ENCODE measurements at regions of chr6 and their contacts with region 1.

Region 1: DNA sequence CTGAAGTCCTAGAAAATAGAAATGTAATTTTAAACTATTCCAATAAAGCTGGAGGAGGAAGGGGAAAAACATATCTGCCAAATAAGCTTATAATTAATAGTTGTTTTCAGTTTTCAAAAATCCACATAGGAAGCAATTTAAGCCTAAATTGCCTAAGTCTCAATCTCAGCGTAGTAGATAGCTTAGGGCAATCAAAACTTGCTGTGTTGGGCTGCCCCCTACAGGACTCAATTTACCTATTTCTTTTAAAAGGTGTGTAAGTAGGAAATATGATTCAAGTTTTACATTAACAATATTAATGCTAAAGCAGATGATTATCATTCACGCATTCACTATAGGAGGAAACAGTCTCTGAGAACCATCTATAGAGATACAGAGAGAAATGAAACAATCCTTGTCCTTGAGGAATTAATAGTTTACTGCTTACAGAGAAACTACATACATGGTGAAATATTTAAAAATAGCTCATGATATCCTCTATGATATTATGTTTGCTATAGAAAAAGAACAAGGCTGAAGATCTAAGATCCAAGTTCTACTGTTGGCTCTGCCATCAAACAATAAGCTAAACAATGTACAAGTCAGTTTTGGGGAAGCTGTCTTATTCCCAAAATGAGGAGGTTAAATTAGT is 102.1 kb downstream of the ATG5 start:
- DNase-seq: peak; percentile 55 to 79 (median 58)
- H3K4me3 ChIP-seq: no peak overlapping the region
- H3K4me3 Mint-ChIP-seq: no peak overlapping the region
- H3K27ac ChIP-seq: no peak overlapping the region
- H3K27ac Mint-ChIP-seq: peak overlapping the region in 3 of 8 donors; percentile 25 to 63 (median 25)
- H3K4me1 ChIP-seq: no peaks in the 10 kb centered on the region
- H3K4me1 Mint-ChIP-seq: peaks cover 18 to 52% (median 26%) of the 10 kb centered on the region in 3 donors
- H3K27me3 ChIP-seq: no peaks in the 10 kb centered on the region
- H3K27me3 Mint-ChIP-seq: no peaks in the 10 kb centered on the region

Region 2: GRCh38 chr6:105484238-105485161 is 738.9 kb before region 1 on chr6:
- CTCF ChIA-PET with region 1: interaction called, 23 read pairs
- POLR2A ChIA-PET with region 1: no interaction called
- DNase-seq: peak in 2 of 5 donors; percentile 18 to 37
- H3K4me3 ChIP-seq: no peak overlapping the region
- H3K4me3 Mint-ChIP-seq: peak overlapping the region; percentile 62 to 87 (median 78)
- H3K27ac ChIP-seq: no peak overlapping the region
- H3K27ac Mint-ChIP-seq: peak overlapping the region; percentile 69 to 99 (median 89)
- H3K4me1 ChIP-seq: no peaks in the 10 kb centered on the region
- H3K4me1 Mint-ChIP-seq: peaks cover 34 to 60% (median 50%) of the 10 kb centered on the region in 3 donors
- H3K27me3 ChIP-seq: no peaks in the 10 kb centered on the region
- H3K27me3 Mint-ChIP-seq: no peaks in the 10 kb centered on the region

Region 3: GRCh38 chr6:105992315-105992961 is 231.0 kb before region 1 on chr6:
- CTCF ChIA-PET with region 1: interaction called, 39 read pairs
- POLR2A ChIA-PET with region 1: interaction called, 5 read pairs
- DNase-seq: peak; percentile 84 to 91 (median 87)
- H3K4me3 ChIP-seq: peak overlapping the region; percentile 93
- H3K4me3 Mint-ChIP-seq: peak overlapping the region; percentile 88 to 99 (median 92)
- H3K27ac ChIP-seq: peak overlapping the region; percentile 79
- H3K27ac Mint-ChIP-seq: peak overlapping the region; percentile 91 to 99 (median 96)
- H3K4me1 ChIP-seq: peaks cover 22% of the 10 kb centered on the region
- H3K4me1 Mint-ChIP-seq: peaks cover 21 to 42% (median 30%) of the 10 kb centered on the region in 3 donors
- H3K27me3 ChIP-seq: peaks cover 12% of the 10 kb centered on the region
- H3K27me3 Mint-ChIP-seq: peaks cover 10 to 23% of the 10 kb centered on the region in 2 donors

Region 4: DNA sequence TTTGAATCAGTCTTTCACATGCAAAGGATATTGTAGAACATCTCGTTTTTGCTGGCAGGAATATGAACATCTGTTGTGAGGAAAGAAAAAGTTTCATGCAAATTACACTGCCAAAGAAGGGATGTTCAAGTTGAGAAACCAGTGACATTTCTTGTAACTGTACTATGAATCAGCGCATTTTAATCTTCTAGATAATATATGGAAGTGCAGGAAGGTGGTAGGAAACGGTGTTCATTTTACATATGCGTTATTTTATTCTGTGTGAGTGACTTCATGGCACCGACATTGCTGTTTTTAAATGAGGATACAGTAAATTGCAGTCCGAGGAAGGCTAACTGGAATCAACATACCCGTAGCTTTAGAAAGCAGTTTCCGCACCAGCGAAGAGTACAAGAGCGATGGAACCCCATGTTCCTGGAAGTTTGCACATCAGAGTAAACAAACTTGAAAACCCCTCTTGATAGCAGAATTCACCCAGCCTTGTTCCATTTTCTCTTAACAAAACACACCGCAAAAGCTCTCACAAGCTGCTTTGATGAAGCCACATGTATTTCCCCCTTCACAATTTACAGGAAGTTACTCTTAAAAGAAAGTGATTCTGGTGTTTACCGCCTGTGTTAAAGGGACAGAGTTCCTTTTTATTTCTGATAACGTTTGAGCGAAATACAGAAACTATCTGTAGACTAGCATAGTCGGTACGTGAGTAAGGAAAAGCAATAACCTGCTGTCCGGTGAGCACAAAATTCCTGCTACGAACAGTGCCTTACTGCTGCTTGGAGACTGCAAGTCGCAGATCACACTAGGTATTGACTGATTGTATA is 125.8 kb before region 1 on chr6:
- CTCF ChIA-PET with region 1: interaction called, 25 read pairs
- POLR2A ChIA-PET with region 1: no interaction called
- DNase-seq: peak in 4 of 5 donors; percentile 37 to 87 (median 78)
- H3K4me3 ChIP-seq: peak overlapping the region; percentile 75
- H3K4me3 Mint-ChIP-seq: peak overlapping the region; percentile 92 to 100 (median 96)
- H3K27ac ChIP-seq: peak overlapping the region; percentile 76
- H3K27ac Mint-ChIP-seq: peak overlapping the region; percentile 81 to 98 (median 95)
- H3K4me1 ChIP-seq: peaks cover 64% of the 10 kb centered on the region
- H3K4me1 Mint-ChIP-seq: peaks cover 67 to 94% (median 91%) of the 10 kb centered on the region in 3 donors
- H3K27me3 ChIP-seq: no peaks in the 10 kb centered on the region
- H3K27me3 Mint-ChIP-seq: no peaks in the 10 kb centered on the region

Region 5: GRCh38 chr6:106163446-106163965 is 59.9 kb before region 1 on chr6:
- CTCF ChIA-PET with region 1: interaction called, 17 read pairs
- POLR2A ChIA-PET with region 1: no interaction called
- DNase-seq: peak in 4 of 5 donors; percentile 34 to 75 (median 40)
- H3K4me3 ChIP-seq: peak overlapping the region; percentile 16
- H3K4me3 Mint-ChIP-seq: peak overlapping the region; percentile 51 to 75 (median 63)
- H3K27ac ChIP-seq: peak overlapping the region; percentile 65
- H3K27ac Mint-ChIP-seq: peak overlapping the region; percentile 79 to 98 (median 96)
- H3K4me1 ChIP-seq: peaks cover 26% of the 10 kb centered on the region
- H3K4me1 Mint-ChIP-seq: peaks cover 36 to 55% (median 51%) of the 10 kb centered on the region in 3 donors
- H3K27me3 ChIP-seq: no peaks in the 10 kb centered on the region
- H3K27me3 Mint-ChIP-seq: peaks cover 0 to 2% of the 10 kb centered on the region in 2 donors

Region 6: GRCh38 chr6:106250953-106251352 is 27.5 kb after region 1 on chr6:
- CTCF ChIA-PET with region 1: no interaction called
- POLR2A ChIA-PET with region 1: no interaction called
- DNase-seq: no peak
- H3K4me3 ChIP-seq: no peak overlapping the region
- H3K4me3 Mint-ChIP-seq: no peak overlapping the region
- H3K27ac ChIP-seq: no peak overlapping the region
- H3K27ac Mint-ChIP-seq: peak overlapping the region in 2 of 8 donors; percentile 20 to 63
- H3K4me1 ChIP-seq: no peaks in the 10 kb centered on the region
- H3K4me1 Mint-ChIP-seq: peaks cover 22 to 70% (median 63%) of the 10 kb centered on the region in 3 donors
- H3K27me3 ChIP-seq: no peaks in the 10 kb centered on the region
- H3K27me3 Mint-ChIP-seq: no peaks in the 10 kb centered on the region

Region 7: DNA sequence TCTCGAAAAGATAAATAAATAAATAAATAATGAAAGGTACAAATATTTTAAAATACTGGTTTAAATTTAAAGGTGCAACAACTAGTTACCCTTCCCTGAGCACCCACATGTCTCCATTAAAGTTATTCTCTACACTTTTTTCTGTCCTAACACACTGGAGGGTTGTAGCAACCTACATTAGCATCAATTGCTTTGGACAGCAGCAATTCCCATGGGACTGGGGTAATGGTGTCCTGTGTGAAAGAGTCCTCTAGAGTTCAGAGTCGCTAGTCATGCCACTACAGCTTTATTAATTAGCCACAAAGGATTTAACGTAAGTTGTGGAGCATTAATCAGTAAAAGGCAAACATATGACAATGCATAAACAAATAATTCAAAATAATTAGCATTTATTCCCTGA is 765.2 kb after region 1 on chr6:
- CTCF ChIA-PET with region 1: no interaction called
- POLR2A ChIA-PET with region 1: no interaction called
- DNase-seq: no peak
- H3K4me3 ChIP-seq: no peak overlapping the region
- H3K4me3 Mint-ChIP-seq: no peak overlapping the region
- H3K27ac ChIP-seq: no peak overlapping the region
- H3K27ac Mint-ChIP-seq: no peak overlapping the region
- H3K4me1 ChIP-seq: no peaks in the 10 kb centered on the region
- H3K4me1 Mint-ChIP-seq: no peaks in the 10 kb centered on the region
- H3K27me3 ChIP-seq: no peaks in the 10 kb centered on the region
- H3K27me3 Mint-ChIP-seq: peaks cover 7 to 16% of the 10 kb centered on the region in 2 donors